Activated CD8-positive, alpha-beta T cell treated with anti-CD3 and anti-CD28 coated beads for 36 hours (primary cell): ENCODE measurements at regions of chr1 and their contacts with region 1.

Region 1: DNA sequence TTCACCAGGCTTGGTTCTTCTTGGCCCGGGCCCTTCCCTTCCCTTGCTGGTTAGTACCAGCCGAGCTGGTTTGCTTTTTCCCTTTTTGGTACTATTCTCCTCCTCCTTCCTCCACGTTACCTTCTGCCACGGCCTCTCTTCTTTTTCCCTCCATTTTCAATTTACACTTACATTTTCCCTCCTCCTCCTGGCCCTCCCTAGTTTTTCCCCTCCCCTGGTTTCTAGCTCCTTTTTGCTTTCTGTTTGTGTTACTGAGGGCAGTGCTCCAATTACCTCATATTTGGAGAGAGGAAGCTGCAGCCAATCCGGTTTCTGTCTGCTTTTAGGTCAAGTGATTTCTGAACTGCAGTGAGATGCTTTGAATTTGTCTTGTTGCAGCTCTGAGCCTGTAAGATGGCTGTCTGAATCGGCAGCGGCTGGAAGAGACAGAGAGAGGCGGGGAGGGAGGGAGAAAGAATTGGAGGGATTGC is 63.7 kb downstream of the MACF1 start:
- DNase-seq: peak; percentile 24
- ATAC-seq: peak; percentile 53
- H3K4me3 Mint-ChIP-seq: peak overlapping the region; percentile 53
- H3K27ac Mint-ChIP-seq: peak overlapping the region; percentile 53
- H3K4me1 Mint-ChIP-seq: peaks cover 82% of the 10 kb centered on the region
- H3K27me3 Mint-ChIP-seq: no peaks in the 10 kb centered on the region
- CTCF ChIP-seq: no peak

Region 2: DNA sequence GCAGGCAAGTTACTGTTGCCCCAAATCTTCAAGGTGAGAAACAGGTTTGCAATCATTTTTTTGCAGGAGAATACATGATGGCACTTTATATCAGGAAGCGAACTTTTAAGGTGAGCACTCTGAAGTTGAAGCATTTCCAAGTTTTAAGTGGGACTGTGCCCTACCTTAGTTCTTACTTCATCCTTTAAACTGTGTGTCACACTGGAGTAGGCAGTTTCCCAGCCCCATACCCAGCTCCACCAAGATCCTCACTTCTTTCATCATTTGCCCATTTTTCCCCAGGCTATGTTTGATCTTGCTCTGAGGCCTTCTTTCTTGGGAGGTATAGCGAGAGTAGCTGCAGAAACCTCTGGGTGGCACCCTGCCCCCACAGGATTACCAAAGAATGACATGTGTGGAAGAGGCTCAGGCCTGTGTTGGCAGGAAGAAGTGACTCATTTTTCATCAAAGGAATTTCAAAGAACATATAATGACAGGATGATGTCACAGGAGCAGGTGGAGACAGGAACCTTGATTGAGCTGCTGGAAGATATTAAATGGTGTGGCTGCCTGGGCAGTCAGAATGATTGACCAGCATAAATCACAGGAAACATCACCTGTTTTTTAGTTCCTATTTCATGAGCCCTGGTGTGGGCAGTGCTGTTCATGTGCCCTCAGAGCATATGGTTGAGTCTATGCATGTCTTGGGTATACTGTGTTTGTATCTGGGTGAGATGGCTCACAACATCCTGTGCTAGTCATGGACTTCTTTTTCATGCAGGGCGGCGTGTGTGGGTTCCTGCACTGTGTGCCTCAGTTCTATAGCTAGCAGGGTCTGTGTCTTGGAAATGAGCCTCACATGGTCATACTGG is 84.4 kb before region 1 on chr1:
- CTCF ChIA-PET with region 1: interaction called, 371 read pairs
- POLR2A ChIA-PET with region 1: interaction called, 3 read pairs
- intact Hi-C with region 1: no loop called
- DNase-seq: peak; percentile 93
- ATAC-seq: peak; percentile 84
- H3K4me3 Mint-ChIP-seq: peak overlapping the region; percentile 32
- H3K27ac Mint-ChIP-seq: peak overlapping the region; percentile 94
- H3K4me1 Mint-ChIP-seq: peaks cover 46% of the 10 kb centered on the region
- H3K27me3 Mint-ChIP-seq: no peaks in the 10 kb centered on the region
- CTCF ChIP-seq: peak; percentile 61

Region 3: GRCh38 chr1:39214021-39214713 is 54.0 kb before region 1 on chr1:
- CTCF ChIA-PET with region 1: no interaction called
- POLR2A ChIA-PET with region 1: no interaction called
- intact Hi-C with region 1: no loop called
- DNase-seq: no peak
- ATAC-seq: no peak
- H3K4me3 Mint-ChIP-seq: peak overlapping the region; percentile 5
- H3K27ac Mint-ChIP-seq: peak overlapping the region; percentile 90
- H3K4me1 Mint-ChIP-seq: peaks cover 45% of the 10 kb centered on the region
- H3K27me3 Mint-ChIP-seq: no peaks in the 10 kb centered on the region
- CTCF ChIP-seq: no peak